Cardiac septum (tissue), 1 donor: ENCODE measurements at regions of chr7 and their contacts with region 1.

Region 1: DNA sequence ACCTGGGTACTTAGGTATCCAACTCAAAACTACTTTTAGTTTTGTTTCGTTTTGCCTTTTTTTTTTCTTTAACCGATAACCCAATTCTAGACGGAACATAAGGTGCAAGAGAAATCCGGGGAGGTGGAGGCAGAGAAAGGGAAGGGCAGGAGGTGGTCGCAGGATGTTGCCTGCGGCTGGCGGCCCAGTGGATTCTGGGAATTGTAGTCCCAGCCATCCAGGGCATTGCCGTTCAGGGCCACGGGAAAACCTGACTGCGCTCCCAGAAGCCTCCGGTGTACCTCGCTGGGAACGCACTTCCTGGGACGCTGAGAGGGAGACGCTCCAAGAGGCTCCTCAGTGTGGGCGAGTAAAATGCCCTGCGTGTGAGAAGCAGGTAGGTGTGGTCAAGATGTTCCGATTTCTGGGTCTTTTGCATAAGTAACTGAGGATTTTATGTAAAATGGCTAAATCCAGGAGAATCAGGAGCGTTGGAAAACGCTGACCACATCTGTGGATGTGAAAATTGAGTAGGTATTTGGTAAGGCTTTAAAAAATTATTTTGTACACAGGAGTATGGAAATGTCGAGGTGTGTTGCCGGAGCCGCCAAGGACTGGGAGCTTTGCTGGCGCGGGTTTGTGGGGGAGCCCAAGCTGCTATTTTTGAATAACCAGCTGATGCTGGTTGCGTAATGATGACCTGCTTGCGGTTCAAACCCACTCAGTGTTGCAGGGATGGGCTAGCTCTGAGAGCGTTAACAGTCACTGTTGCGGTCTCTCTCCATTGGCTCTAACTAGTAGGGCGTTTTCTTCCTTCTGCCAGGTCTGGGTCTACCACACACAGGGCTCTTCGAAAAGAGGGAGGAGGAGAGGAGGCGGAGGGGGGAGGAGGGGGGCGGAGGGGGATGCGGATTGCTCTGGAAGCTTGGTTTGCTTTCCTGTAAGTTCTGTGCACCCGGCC is at the start of gene CLDN12:
- DNase-seq: peak; percentile 91
- total RNA-seq, gene CLDN12: 19.9 TPM

Region 2: DNA sequence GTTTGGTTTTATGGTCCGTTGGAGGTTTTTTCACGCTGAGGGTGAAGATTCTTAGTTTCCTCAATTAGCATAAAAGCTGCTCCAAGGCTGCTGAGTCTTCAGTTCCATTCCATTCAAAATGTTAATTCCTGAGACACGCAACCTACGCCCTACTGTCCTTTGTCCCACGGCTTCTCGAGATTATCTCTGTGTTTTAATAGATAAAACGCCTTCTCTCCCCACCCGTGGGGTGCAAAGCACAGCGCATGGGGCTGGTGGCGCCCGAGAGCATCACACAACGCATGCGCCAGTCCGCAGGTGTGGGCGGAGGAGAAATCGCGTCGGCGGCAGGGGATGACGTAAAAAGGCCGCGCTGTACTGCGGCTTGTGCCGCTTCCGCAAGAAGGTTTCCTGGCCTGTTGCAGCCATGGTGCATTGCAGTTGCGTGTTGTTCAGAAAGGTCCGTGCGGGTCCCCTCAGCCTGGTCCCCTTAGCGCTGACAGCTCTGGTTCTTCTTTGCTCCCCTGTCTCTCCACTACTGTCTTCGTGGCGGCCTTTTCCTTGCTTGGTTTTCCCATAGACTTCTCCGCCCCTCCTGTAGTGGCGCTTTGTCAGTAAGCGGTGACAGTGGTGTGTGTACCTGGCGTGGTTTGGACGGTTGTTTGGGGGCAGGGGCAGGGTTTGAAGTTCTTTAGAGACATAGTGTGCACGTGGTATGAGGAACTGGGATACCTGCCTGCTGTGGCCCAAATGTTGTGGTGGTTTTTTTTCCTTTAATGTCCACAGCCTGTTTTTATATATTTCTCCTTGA is 56.9 kb before region 1 on chr7 and contains the start of gene GTPBP10:
- intact Hi-C with region 1: loop called (anchors 2 kb)
- DNase-seq: peak; percentile 98
- total RNA-seq, gene GTPBP10: 19.4 TPM

Region 3: GRCh38 chr7:90461219-90461618 is 57.8 kb after region 1 on chr7:
- intact Hi-C with region 1: no loop called
- DNase-seq: no peak

Region 4: DNA sequence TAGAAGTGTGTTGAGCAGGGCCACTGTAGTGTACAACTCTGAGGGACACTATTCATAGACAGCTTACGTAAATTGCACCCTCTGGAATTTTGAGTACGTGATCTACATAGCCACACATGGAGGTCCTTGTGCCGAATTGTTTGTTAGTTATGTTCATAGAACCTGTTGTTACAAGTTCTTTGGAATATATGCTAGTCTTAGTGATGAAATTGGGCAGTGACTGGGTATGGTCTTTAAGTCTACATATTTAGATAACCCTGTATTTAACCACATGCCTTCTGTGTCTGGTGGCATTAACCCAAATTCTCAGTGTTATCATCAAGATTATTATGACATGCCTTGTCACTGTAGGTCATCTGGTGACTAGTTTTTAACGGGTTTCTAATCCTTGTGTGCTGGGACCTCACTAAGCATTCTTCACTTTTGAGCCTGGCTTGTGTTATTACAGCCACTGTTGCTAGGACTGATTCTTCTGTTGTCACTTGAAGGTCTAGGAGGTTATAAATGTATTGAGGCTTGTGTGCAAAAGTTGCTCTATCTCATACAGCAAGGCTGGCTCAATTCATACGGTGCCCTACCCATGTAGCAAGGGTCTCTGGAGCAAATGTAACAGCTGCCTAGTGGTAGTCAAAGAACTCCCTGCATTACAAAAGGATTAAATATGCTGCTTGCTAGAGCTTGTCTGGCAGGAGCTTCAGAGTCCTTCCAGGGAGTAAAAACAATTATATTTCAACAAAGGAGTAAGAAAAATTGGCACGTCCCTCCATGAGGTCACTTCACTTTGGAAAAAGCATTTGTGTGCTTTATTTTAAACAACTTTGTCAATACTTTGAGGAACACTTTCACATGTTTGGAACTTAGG is 258.1 kb after region 1 on chr7:
- intact Hi-C with region 1: no loop called
- DNase-seq: no peak